ENCODE measurements at regions of chr16 and their contacts with region 1.

Region 1: GRCh38 chr16:1610276-1611017 is 1.4 kb downstream of the IFT140 start:
- DNase-seq: peak; percentile 84 to 97
- H3K4me3 ChIP-seq: peak overlapping the region; percentile 87
- H3K27ac ChIP-seq: peak overlapping the region; percentile 92
- H3K4me1 ChIP-seq: peaks cover 21% of the 10 kb centered on the region
- H3K27me3 ChIP-seq: no peaks in the 10 kb centered on the region
- CTCF ChIP-seq: no peak

Region 2: GRCh38 chr16:1413684-1414531 is 196.5 kb before region 1 on chr16:
- CTCF ChIA-PET with region 1: no interaction called
- POLR2A ChIA-PET with region 1: interaction called, 3 read pairs
- intact Hi-C with region 1: loop called (anchors 5 kb)
- DNase-seq: peak in 1 of 2 experiments; percentile 56
- H3K4me3 ChIP-seq: peak overlapping the region; percentile 78
- H3K27ac ChIP-seq: peak overlapping the region; percentile 55
- H3K4me1 ChIP-seq: peaks cover 36% of the 10 kb centered on the region
- H3K27me3 ChIP-seq: no peaks in the 10 kb centered on the region
- CTCF ChIP-seq: peak; percentile 76

Region 3: GRCh38 chr16:1492923-1493745 is 117.3 kb before region 1 on chr16 and contains the start of gene TELO2:
- CTCF ChIA-PET with region 1: no interaction called
- POLR2A ChIA-PET with region 1: interaction called, 5 read pairs
- intact Hi-C with region 1: loop called (anchors 5 kb)
- DNase-seq: peak; percentile 55 to 88
- H3K4me3 ChIP-seq: peak within 1 kb of the TSS; percentile 98
- H3K27ac ChIP-seq: peak within 1 kb of the TSS; percentile 64
- H3K4me1 ChIP-seq: peaks cover 18% of the 10 kb centered on the region; the same call in 1 of the 2 replicates
- H3K27me3 ChIP-seq: no peaks in the 10 kb centered on the region
- CTCF ChIP-seq: no peak
- total RNA-seq, gene TELO2: 56.0 and 67.6 TPM in 2 replicates

Region 4: GRCh38 chr16:1677802-1678496 is 67.5 kb after region 1 on chr16 and contains the start of gene JPT2:
- CTCF ChIA-PET with region 1: no interaction called
- POLR2A ChIA-PET with region 1: interaction called, 22 read pairs
- intact Hi-C with region 1: no loop called
- DNase-seq: peak; percentile 90 to 99
- H3K4me3 ChIP-seq: peak within 1 kb of the TSS; percentile 98
- H3K27ac ChIP-seq: peak within 1 kb of the TSS; percentile 82
- H3K4me1 ChIP-seq: peaks cover 27% of the 10 kb centered on the region
- H3K27me3 ChIP-seq: no peaks in the 10 kb centered on the region
- CTCF ChIP-seq: no peak
- total RNA-seq, gene JPT2: 199 and 244 TPM in 2 replicates

Region 5: GRCh38 chr16:1705688-1706385 is 95.4 kb after region 1 on chr16 and contains the start of gene MAPK8IP3:
- CTCF ChIA-PET with region 1: no interaction called
- POLR2A ChIA-PET with region 1: interaction called, 14 read pairs
- intact Hi-C with region 1: no loop called
- DNase-seq: peak; percentile 69 to 99
- H3K4me3 ChIP-seq: peak within 1 kb of the TSS; percentile 100
- H3K27ac ChIP-seq: peak within 1 kb of the TSS; percentile 72
- H3K4me1 ChIP-seq: peaks cover 18% of the 10 kb centered on the region
- H3K27me3 ChIP-seq: no peaks in the 10 kb centered on the region
- CTCF ChIP-seq: peak; percentile 74
- total RNA-seq, gene MAPK8IP3: 119 and 125 TPM in 2 replicates

Region 6: GRCh38 chr16:1772736-1773584 is 162.5 kb after region 1 on chr16 and contains the starts of genes EME2 and MRPS34:
- CTCF ChIA-PET with region 1: no interaction called
- POLR2A ChIA-PET with region 1: no interaction called
- intact Hi-C with region 1: loop called (anchors 2 kb)
- DNase-seq: peak; percentile 69 to 93
- H3K4me3 ChIP-seq: peak within 1 kb of the TSS; percentile 77
- H3K27ac ChIP-seq: peak within 1 kb of the TSS; percentile 77
- H3K4me1 ChIP-seq: peaks cover 19% of the 10 kb centered on the region
- H3K27me3 ChIP-seq: no peaks in the 10 kb centered on the region
- CTCF ChIP-seq: peak; percentile 90
- total RNA-seq, gene EME2: 24.2 and 32.4 TPM in 2 replicates
- total RNA-seq, gene MRPS34: 201 and 247 TPM in 2 replicates